GM12878 (cell line): ENCODE measurements at regions of chr5 and their contacts with region 1.

Region 1: GRCh38 chr5:54310433-54311175 is at the start of gene ARL15:
- DNase-seq: peak; percentile 87
- ATAC-seq: peak; percentile 95
- H3K4me3 ChIP-seq: peak within 1 kb of the TSS; percentile 90
- H3K27ac ChIP-seq: peak within 1 kb of the TSS; percentile 49
- H3K4me1 ChIP-seq: no peaks in the 10 kb centered on the region
- H3K27me3 ChIP-seq: no peaks in the 10 kb centered on the region
- CTCF ChIP-seq: no peak
- EP300 ChIP-seq: 0 out of 4 replicates have a peak, but pooled peaks of 1 of the 2 experiments have one; percentile 17
- POLR2A ChIP-seq: peak; percentile 100
- RAD21 ChIP-seq: no peak
- polyA plus RNA-seq, gene ARL15: 3.6 to 3.7 TPM

Region 2: GRCh38 chr5:54186912-54187445 is 123.6 kb before region 1 on chr5:
- CTCF ChIA-PET with region 1: no interaction called
- POLR2A ChIA-PET with region 1: no interaction called
- RAD21 ChIA-PET with region 1: no interaction called
- SMC1A ChIA-PET with region 1: no interaction called
- in situ Hi-C with region 1: no loop called
- intact Hi-C with region 1: no loop called
- DNase-seq: no peak
- ATAC-seq: no peak
- H3K4me3 ChIP-seq: no peak overlapping the region
- H3K27ac ChIP-seq: no peak overlapping the region
- H3K4me1 ChIP-seq: no peaks in the 10 kb centered on the region
- H3K27me3 ChIP-seq: no peaks in the 10 kb centered on the region
- CTCF ChIP-seq: no peak
- EP300 ChIP-seq: no peak
- POLR2A ChIP-seq: no peak
- RAD21 ChIP-seq: no peak

Region 3: DNA sequence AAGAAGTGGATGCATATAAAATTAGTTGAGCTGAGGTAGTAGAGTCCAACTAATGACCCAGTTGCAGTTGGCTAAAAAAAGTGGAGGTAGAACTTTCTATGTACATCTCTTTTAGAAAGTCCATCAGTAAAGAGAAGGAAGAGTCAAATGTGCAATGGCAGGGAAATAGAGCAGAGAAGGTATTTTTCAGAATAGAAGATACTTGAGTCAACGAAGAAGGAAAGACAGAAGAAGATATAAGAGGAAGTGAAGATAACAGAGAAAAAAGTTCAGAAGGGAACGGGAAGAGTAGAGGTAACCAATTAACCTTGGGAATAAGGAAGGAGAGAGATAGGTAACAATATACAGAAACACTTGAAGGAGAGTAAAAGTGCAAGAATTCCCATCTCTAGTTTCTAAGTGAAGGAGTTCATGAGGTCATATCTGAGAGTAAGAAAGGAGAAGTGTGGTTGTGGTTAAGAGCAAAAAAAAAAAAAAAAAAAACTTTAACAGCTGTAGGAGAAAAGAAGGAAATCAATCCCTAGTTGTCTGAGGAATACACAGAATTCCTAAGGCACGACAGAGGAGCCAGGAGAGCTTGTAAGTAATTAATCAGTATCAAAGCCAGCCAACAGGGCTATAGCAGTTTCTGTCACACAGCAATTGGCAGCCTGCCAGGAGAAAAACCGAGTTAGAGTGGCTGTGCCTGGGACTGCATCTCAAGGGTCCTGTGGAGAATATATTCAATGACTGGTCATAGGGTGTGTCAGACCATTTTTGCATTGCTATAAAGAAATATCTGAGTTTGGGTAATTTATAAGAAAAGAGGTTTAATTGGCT is 61.2 kb before region 1 on chr5:
- CTCF ChIA-PET with region 1: interaction called, 16 read pairs
- POLR2A ChIA-PET with region 1: interaction called, 3 read pairs
- RAD21 ChIA-PET with region 1: interaction called, 10 read pairs
- SMC1A ChIA-PET with region 1: interaction called, 9 read pairs
- in situ Hi-C with region 1: no loop called
- intact Hi-C with region 1: loop called (anchors 5 kb)
- DNase-seq: no peak
- ATAC-seq: peak; percentile 85
- H3K4me3 ChIP-seq: no peak overlapping the region
- H3K27ac ChIP-seq: no peak overlapping the region
- H3K4me1 ChIP-seq: no peaks in the 10 kb centered on the region; the same call in none of the 2 replicates
- H3K27me3 ChIP-seq: no peaks in the 10 kb centered on the region
- CTCF ChIP-seq: no peak
- EP300 ChIP-seq: no peak
- POLR2A ChIP-seq: no peak
- RAD21 ChIP-seq: no peak

Region 4: DNA sequence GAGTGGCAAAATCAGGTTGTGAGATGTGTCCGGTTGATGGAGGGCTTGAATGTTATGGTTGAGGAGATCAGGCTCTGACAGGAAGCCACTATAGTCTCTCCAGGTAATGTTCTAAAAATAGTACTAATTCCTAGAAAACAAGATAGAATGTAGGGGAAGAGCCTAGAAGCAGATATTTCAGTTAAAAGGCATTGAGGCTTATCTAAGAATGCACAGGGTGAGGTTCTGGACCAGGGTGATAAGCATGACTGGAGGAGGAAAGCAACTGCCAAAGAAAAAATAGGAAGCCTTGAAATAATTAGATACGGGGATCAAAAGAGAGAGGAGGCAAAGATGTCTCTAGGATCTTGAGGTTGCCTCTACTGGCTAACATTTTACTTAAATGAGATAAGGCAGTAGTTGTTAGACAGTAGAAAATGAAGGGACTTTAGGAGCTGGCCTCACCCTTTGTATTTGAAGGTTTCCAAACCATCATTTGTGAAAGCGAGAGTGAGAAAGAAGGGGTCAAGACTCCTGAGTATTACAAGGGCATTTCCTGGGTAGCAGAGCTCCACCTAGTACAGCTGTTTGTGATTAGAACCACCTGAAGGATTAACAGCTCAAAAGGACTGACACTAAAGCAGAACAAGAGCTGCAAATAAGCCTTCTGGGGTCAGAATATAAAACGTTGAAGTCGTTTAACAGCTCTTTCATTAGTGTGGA is 15.2 kb after region 1 on chr5:
- CTCF ChIA-PET with region 1: interaction called, 4 read pairs
- POLR2A ChIA-PET with region 1: interaction called, 10 read pairs
- RAD21 ChIA-PET with region 1: interaction called, 4 read pairs
- SMC1A ChIA-PET with region 1: interaction called, 5 read pairs
- in situ Hi-C with region 1: no loop called
- intact Hi-C with region 1: no loop called
- DNase-seq: no peak
- ATAC-seq: peak; percentile 95
- H3K4me3 ChIP-seq: no peak overlapping the region
- H3K27ac ChIP-seq: no peak overlapping the region
- H3K4me1 ChIP-seq: no peaks in the 10 kb centered on the region
- H3K27me3 ChIP-seq: no peaks in the 10 kb centered on the region; a peak in 1 of 4 replicates
- CTCF ChIP-seq: no peak
- EP300 ChIP-seq: no peak
- POLR2A ChIP-seq: no peak
- RAD21 ChIP-seq: no peak

Region 5: GRCh38 chr5:54401515-54401914 is 90.9 kb after region 1 on chr5:
- CTCF ChIA-PET with region 1: interaction called, 22 read pairs
- POLR2A ChIA-PET with region 1: interaction called, 12 read pairs
- RAD21 ChIA-PET with region 1: interaction called, 12 read pairs
- SMC1A ChIA-PET with region 1: interaction called, 10 read pairs
- in situ Hi-C with region 1: no loop called
- intact Hi-C with region 1: no loop called
- DNase-seq: no peak
- ATAC-seq: peak; percentile 96
- H3K4me3 ChIP-seq: no peak overlapping the region
- H3K27ac ChIP-seq: no peak overlapping the region
- H3K4me1 ChIP-seq: peaks cover 5% of the 10 kb centered on the region
- H3K27me3 ChIP-seq: no peaks in the 10 kb centered on the region
- CTCF ChIP-seq: no peak
- EP300 ChIP-seq: no peak
- POLR2A ChIP-seq: no peak
- RAD21 ChIP-seq: no peak

Region 6: GRCh38 chr5:54443270-54443669 is 132.7 kb after region 1 on chr5:
- CTCF ChIA-PET with region 1: interaction called, 6 read pairs
- POLR2A ChIA-PET with region 1: interaction called, 16 read pairs
- RAD21 ChIA-PET with region 1: no interaction called
- SMC1A ChIA-PET with region 1: no interaction called
- in situ Hi-C with region 1: no loop called
- intact Hi-C with region 1: no loop called
- DNase-seq: no peak
- ATAC-seq: peak; percentile 73
- H3K4me3 ChIP-seq: no peak overlapping the region
- H3K27ac ChIP-seq: no peak overlapping the region
- H3K4me1 ChIP-seq: peaks cover 21% of the 10 kb centered on the region
- H3K27me3 ChIP-seq: no peaks in the 10 kb centered on the region; a peak in 2 of 4 replicates
- CTCF ChIP-seq: peak; percentile 37 to 51 (median 43)
- EP300 ChIP-seq: no peak
- POLR2A ChIP-seq: no peak
- RAD21 ChIP-seq: peak; percentile 56; the same call in 1 of the 2 replicates

Region 7: DNA sequence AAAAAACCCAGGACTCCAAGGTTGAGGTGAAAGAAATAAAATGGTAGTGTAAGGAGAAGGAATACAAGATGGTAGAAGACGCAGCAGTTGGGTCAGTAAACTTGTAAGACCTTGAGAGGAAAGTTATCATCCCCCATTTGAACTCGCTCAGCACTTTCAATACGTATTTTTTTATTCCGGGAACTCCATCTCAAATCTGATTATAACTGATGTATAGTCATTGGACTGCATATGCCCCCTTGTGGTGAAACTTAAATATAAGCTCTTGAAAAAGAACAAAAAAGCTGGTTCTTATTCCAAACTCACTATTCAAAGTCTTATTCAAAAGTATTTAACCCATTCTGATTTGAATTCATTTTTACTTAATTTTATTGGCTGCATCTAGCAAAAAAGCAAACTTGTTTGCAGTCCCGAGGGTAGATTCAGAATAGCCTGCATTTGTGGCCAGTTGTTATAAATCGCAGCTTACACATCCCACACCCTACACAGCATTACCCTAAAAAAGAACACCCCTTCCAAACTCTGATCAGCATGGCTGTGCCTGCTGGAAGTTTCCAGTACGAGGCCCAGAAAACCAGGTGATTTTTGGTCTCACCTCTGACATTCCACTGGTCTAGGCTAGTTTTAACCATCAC is 556.8 kb after region 1 on chr5:
- CTCF ChIA-PET with region 1: no interaction called
- POLR2A ChIA-PET with region 1: interaction called, 11 read pairs
- RAD21 ChIA-PET with region 1: no interaction called
- SMC1A ChIA-PET with region 1: no interaction called
- in situ Hi-C with region 1: no loop called
- intact Hi-C with region 1: no loop called
- DNase-seq: no peak
- ATAC-seq: peak; percentile 38; the same call in 1 of the 3 replicates
- H3K4me3 ChIP-seq: no peak overlapping the region
- H3K27ac ChIP-seq: no peak overlapping the region
- H3K4me1 ChIP-seq: no peaks in the 10 kb centered on the region
- H3K27me3 ChIP-seq: peaks cover 2 to 4% of the 10 kb centered on the region in 2 experiments; a peak in 2 of 4 replicates
- CTCF ChIP-seq: peak; percentile 36 to 47 (median 46); a peak in 5 of 6 replicates
- EP300 ChIP-seq: no peak
- POLR2A ChIP-seq: no peak
- RAD21 ChIP-seq: peak; percentile 56